GM12878 (cell line): ENCODE measurements at regions of chr16 and their contacts with region 1.

Region 1: GRCh38 chr16:62846399-62847057 is 810.3 kb upstream of the CDH8 start:
- DNase-seq: no peak
- ATAC-seq: no peak
- H3K4me3 ChIP-seq: no peak overlapping the region
- H3K27ac ChIP-seq: no peak overlapping the region
- H3K4me1 ChIP-seq: no peaks in the 10 kb centered on the region
- H3K27me3 ChIP-seq: no peaks in the 10 kb centered on the region
- CTCF ChIP-seq: no peak
- EP300 ChIP-seq: no peak
- POLR2A ChIP-seq: no peak
- RAD21 ChIP-seq: no peak

Region 2: DNA sequence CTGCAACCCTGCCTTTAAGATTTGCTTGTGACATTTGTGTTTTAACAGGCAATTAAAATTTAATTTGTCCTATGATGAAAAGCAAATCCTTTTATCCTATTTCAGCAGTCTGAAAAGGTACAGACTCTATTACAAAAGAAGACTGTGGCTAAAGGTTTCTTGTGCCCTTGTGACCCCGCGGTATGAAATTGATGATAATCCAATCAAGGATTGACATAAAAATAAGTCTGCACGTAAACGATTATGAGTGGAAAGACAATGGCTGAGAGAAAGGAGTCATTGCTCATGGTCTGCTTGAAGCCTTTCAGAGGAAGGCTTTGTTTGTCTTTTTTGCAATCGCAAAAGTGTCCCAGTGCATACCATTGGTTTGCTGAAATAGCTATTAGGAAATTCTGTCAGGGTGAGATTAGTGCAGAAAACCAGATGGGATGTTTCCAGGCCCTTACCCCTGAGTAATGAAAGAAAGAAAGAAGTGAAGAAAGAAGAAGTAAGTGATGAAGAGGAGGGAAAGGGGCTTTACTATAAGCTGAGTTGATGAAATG is 57.5 kb after region 1 on chr16:
- CTCF ChIA-PET with region 1: no interaction called
- POLR2A ChIA-PET with region 1: no interaction called
- RAD21 ChIA-PET with region 1: no interaction called
- SMC1A ChIA-PET with region 1: no interaction called
- in situ Hi-C with region 1: loop called (anchors 10 kb)
- intact Hi-C with region 1: no loop called
- DNase-seq: no peak
- ATAC-seq: no peak
- H3K4me3 ChIP-seq: no peak overlapping the region
- H3K27ac ChIP-seq: no peak overlapping the region
- H3K4me1 ChIP-seq: no peaks in the 10 kb centered on the region
- H3K27me3 ChIP-seq: no peaks in the 10 kb centered on the region
- CTCF ChIP-seq: no peak
- EP300 ChIP-seq: no peak
- POLR2A ChIP-seq: no peak
- RAD21 ChIP-seq: no peak